Activated CD4-positive, alpha-beta memory T cell treated with anti-CD3 and anti-CD28 coated beads, Interleukin-2, amount 10 ng/mL, durations not matched to agents 7 days and 5 days (primary cell): ENCODE measurements at regions of chr15 and their contacts with region 1.

Region 1: GRCh38 chr15:52208306-52208946 is 17.2 kb upstream of the GNB5 start:
- DNase-seq: peak; percentile 84
- H3K4me3 Mint-ChIP-seq: no peak overlapping the region
- H3K27ac Mint-ChIP-seq: no peak overlapping the region
- H3K4me1 Mint-ChIP-seq: peaks cover 2% of the 10 kb centered on the region
- H3K27me3 Mint-ChIP-seq: no peaks in the 10 kb centered on the region

Region 2: DNA sequence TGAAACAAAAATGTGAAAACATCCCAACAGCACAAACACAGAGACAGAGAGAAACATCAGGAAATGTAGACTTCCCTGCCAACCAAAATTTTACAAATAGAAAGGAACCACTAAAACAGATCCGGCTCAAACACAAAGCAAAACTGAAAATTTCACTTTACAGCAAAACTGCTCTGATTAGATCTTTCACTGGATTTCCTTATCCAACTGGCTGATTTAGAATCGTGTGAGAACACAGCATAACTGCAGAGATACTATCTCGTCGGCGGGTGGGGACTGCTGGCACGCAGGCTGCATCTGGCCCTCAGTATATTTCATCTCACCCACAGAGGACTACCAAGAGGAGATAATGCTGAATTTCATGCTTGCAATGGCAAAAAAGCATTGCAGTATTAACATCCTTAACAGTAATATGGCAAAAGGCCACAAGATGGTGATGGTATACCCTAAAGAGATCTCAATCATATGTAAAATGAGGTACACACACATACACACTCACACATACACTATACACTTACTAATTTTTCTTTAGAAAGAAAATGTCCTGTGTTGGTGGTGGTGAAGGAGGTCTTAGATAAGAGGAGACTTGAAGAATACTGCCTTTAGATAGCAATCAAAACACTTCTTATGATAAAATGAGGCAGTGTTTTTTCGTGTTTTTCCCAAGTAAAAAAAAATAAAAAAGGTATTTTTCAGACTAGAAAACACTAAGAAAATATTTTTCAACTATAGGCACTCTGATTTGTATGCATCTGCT is 226.2 kb before region 1 on chr15:
- CTCF ChIA-PET with region 1: interaction called, 10 read pairs
- POLR2A ChIA-PET with region 1: no interaction called
- DNase-seq: peak; percentile 80
- H3K4me3 Mint-ChIP-seq: peak overlapping the region; percentile 78
- H3K27ac Mint-ChIP-seq: peak overlapping the region; percentile 88
- H3K4me1 Mint-ChIP-seq: peaks cover 20% of the 10 kb centered on the region
- H3K27me3 Mint-ChIP-seq: no peaks in the 10 kb centered on the region

Region 3: GRCh38 chr15:52163321-52164190 is 44.9 kb before region 1 on chr15:
- CTCF ChIA-PET with region 1: interaction called, 16 read pairs
- POLR2A ChIA-PET with region 1: no interaction called
- DNase-seq: no peak
- H3K4me3 Mint-ChIP-seq: no peak overlapping the region
- H3K27ac Mint-ChIP-seq: no peak overlapping the region
- H3K4me1 Mint-ChIP-seq: peaks cover 12% of the 10 kb centered on the region
- H3K27me3 Mint-ChIP-seq: no peaks in the 10 kb centered on the region

Region 4: GRCh38 chr15:52227456-52227855 is 19.0 kb after region 1 on chr15:
- CTCF ChIA-PET with region 1: interaction called, 24 read pairs
- POLR2A ChIA-PET with region 1: no interaction called
- DNase-seq: peak; percentile 77
- H3K4me3 Mint-ChIP-seq: no peak overlapping the region
- H3K27ac Mint-ChIP-seq: no peak overlapping the region
- H3K4me1 Mint-ChIP-seq: peaks cover 18% of the 10 kb centered on the region
- H3K27me3 Mint-ChIP-seq: no peaks in the 10 kb centered on the region